Panc1 (cell line): ENCODE measurements at regions of chr7 and their contacts with region 1.

Region 1: GRCh38 chr7:31432176-31432575 is 81.7 kb upstream of the ITPRID1 start:
- DNase-seq: no peak
- ATAC-seq: no peak
- H3K4me3 ChIP-seq: no peak overlapping the region
- H3K27ac ChIP-seq: no peak overlapping the region
- H3K4me1 ChIP-seq: no peaks in the 10 kb centered on the region
- H3K27me3 ChIP-seq: no peaks in the 10 kb centered on the region
- CTCF ChIP-seq: no peak

Region 2: GRCh38 chr7:32490127-32490822 is 1058.1 kb after region 1 on chr7 and contains the start of gene LSM5:
- CTCF ChIA-PET with region 1: no interaction called
- POLR2A ChIA-PET with region 1: interaction called, 11 read pairs
- in situ Hi-C with region 1: no loop called
- intact Hi-C with region 1: no loop called
- DNase-seq: peak; percentile 91
- ATAC-seq: peak; percentile 94
- H3K4me3 ChIP-seq: peak within 1 kb of the TSS; percentile 77 to 80
- H3K27ac ChIP-seq: peak within 1 kb of the TSS; percentile 97
- H3K4me1 ChIP-seq: peaks cover 14% of the 10 kb centered on the region; the same call in 1 of the 2 replicates
- H3K27me3 ChIP-seq: no peaks in the 10 kb centered on the region
- CTCF ChIP-seq: no peak
- total RNA-seq, gene LSM5: 109 TPM